ENCODE measurements at regions of chr2 and their contacts with region 1.

Region 1: DNA sequence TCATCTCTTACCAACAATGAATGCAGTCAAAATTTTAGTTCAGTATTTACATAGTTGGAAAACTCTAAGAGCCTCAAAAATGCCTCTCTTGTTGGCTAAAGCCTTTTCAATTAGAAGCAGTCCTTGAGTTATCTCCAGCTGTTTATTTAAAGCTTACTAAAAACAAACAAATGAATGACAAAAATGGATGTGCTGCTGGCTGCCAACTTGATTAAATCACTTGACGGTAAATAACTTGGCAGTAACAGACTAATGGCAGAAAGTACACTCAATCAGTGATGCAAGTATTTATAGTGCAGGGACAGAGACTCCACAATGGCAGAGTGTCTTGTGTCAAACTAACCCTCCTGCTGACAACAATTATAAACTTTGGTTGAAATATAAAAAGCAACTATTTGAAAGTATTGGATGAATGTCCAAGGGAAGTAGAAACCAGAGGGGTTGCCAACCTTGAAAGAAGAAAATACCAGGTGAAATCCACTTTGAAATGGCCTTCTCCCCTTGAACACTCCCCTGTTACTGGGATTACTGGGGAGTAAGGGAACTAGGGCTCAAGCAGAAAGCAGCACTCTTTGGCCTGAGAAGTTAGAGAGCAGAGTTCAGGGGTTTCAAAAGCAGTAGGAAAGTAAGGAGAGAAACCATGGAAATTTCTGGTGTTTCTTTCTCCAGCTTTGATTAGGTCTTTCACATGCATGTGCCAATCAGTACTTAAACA is 245.2 kb upstream of the SPHKAP start:
- DNase-seq: peak; percentile 60
- ATAC-seq: peak; percentile 76
- H3K4me3 ChIP-seq: peak overlapping the region; percentile 57
- H3K27ac ChIP-seq: peak overlapping the region; percentile 70
- H3K4me1 ChIP-seq: peaks cover 11% of the 10 kb centered on the region
- H3K27me3 ChIP-seq: no peaks in the 10 kb centered on the region
- CTCF ChIP-seq: no peak

Region 2: DNA sequence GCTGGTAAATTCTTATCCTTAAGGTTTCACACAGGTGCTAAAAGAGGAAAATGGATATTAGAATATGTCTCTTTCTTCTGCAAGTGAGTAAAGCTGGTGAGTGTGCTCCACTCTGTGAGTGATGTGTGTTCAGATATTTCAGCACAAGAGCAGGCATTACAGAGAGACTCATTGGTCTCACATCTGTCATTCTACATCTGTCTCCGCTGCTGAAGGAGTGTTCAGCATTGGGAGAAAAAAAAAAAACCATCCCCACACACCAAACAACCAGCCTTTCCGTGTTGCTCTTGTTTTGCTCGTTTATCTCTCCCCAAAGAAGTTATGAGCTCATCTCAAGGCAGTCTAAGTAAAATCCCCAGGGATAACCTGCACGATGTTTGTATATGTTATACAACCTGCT is 38.7 kb after region 1 on chr2:
- CTCF ChIA-PET with region 1: interaction called, 14 read pairs
- POLR2A ChIA-PET with region 1: no interaction called
- intact Hi-C with region 1: no loop called
- DNase-seq: no peak
- ATAC-seq: no peak
- H3K4me3 ChIP-seq: no peak overlapping the region
- H3K27ac ChIP-seq: no peak overlapping the region
- H3K4me1 ChIP-seq: no peaks in the 10 kb centered on the region
- H3K27me3 ChIP-seq: no peaks in the 10 kb centered on the region
- CTCF ChIP-seq: no peak

Measured in PC-3 (cell line).